ENCODE measurements at regions of chr18 and their contacts with region 1.

Region 1: GRCh38 chr18:712401-713134 is at the start of gene ENOSF1:
- DNase-seq: peak; percentile 54 to 93
- H3K4me3 ChIP-seq: peak within 1 kb of the TSS; percentile 63 to 97
- H3K27ac ChIP-seq: peak within 1 kb of the TSS; percentile 74 to 82
- H3K4me1 ChIP-seq: no peaks in the 10 kb centered on the region
- H3K27me3 ChIP-seq: no peaks in the 10 kb centered on the region
- CTCF ChIP-seq: peak; percentile 71 to 93 (median 86)
- total RNA-seq, gene ENOSF1: 178 TPM

Region 2: DNA sequence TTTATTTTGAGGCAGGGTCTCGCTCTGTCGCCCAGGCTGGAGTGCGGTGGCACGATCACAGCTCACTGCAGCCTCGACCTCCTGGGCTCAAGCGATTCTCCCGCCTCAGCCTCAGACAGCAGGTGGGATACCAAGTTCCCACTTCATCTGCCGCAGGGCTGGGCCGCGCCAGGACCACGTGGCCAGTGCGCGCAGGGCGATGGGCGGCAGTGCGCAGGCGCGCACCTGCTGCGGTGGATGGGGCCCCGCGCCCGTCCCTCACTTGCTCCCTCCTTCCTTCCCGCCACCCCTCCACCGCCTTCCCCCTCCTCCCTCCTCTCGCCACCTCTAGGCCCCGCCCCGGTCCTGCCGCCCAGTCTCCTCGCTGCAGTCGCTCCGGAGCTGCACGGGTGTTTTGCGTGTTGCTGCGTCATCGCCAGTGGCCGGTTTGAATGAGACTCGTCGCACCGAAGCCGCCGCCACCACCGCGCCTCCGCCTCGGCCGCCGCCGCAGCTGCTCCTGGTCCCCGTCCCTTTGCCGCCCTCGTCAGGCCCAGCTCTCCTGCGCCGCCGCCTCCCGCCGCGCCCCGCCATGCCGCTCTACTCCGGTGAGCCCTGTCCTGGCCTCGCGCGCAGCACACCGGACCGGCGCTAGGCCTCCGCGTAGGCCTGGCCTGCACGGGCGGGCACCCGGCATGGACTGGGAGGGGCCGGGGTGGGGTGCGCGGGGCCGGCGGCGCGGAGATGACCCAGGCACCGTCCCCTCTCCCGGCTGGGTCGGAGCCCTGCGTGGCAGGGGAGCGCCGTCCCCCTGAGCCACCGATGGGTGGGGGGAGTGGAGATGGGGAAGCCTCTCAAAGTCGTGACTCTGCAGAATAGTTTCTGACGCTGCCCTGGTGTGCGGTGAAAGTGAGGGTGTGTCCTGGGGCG is 554.2 kb before region 1 on chr18 and contains the start of gene USP14:
- intact Hi-C with region 1: loop called (anchors 5 kb)
- DNase-seq: peak; percentile 89 to 97
- H3K4me3 ChIP-seq: peak within 1 kb of the TSS; percentile 94 to 97
- H3K27ac ChIP-seq: peak within 1 kb of the TSS; percentile 79 to 87
- H3K4me1 ChIP-seq: peaks cover 5 to 11% of the 10 kb centered on the region in 2 donors
- H3K27me3 ChIP-seq: no peaks in the 10 kb centered on the region
- CTCF ChIP-seq: peak in 2 of 3 experiments; percentile 18 to 21
- total RNA-seq, gene USP14: 9.7 TPM

Region 3: DNA sequence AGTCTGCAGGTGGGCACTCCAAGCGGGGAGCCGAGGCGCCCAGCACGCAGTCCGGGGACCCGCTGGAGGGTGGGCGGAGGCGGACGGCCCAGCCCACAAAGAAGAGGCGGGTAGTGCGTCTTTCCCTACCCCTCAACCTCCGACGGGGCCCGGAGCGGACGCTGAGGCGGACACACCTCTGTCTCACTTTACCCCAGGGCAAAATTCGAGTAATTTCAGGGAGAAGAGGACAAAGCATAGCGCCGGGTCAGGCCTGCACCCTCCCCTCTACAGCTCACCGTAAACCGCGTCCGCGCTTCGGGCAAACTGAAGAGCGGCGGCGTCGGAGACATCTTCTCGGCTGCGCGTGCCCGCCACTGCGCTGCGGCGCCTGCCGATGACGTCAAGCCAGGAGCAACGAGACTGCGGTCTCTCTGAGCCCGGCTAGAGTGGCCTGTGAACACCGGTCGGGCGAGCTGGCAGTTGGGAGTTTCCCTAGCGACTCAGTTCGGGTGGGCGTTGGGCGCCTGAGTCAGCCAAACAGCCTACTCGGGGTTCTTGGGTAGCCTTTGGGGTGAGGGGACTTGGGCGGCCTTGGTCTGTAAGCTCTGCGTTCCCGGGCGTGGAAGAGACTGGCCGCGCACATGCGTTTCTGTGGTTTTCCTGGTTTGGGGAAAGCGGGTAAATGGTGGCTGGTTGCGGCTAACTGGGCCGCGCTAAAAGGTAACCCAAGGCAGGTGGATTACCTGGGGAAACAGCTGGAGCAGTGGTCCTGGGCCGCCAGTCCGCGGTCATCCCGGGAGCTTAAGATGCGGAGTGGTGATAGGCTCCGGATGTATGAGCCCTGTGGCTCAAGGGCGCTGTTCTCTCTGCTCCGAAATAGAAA is 444.6 kb before region 1 on chr18 and contains the start of gene THOC1:
- intact Hi-C with region 1: loop called (anchors 5 kb)
- DNase-seq: peak; percentile 70 to 95
- H3K4me3 ChIP-seq: peak within 1 kb of the TSS; percentile 66 to 80
- H3K27ac ChIP-seq: peak within 1 kb of the TSS; percentile 77 to 90
- H3K4me1 ChIP-seq: peaks cover 6 to 7% of the 10 kb centered on the region in 2 donors
- H3K27me3 ChIP-seq: no peaks in the 10 kb centered on the region
- CTCF ChIP-seq: no peak
- total RNA-seq, gene THOC1: 12.0 TPM

Region 4: DNA sequence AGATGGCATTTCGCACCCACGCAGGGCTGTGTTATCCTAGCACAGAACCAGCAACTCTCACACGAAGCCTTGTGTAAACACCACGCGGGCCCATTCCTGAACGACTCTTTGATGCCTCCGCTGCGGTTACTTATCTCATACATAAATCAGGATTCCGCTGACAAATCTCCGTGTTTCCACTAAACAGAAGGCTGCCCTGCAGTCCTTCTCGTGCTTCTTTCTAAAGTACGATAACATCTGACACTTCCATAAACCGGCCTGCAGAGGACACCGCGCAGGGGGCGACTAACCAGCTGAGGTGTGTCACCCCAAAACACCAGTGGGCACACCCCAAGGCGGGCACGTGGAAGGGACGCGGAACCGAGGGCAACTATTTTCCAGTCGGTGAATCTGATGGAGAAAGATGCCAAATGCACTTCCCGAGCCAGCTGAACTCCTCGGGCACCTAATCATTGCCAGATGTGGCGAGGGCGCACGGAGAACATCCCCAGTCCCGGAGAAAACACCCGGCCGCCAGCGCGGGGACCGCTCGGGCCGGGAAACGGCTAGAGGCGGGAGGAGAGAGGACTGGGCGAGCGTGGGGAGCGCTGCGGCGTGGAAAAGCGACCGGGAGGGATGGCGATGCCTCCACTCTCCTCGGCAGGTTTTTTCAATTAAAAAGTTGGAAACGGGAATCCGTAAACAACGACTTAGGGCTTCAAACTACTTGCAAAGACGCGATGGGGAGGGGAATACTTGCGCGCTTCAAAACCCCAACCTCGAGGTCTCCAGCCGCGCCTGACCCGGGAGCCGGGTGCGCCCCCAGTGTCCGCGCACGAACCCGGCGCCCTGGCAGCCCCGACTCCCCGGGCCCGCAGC is 212.8 kb before region 1 on chr18:
- intact Hi-C with region 1: no loop called
- DNase-seq: no peak
- H3K4me3 ChIP-seq: peak overlapping the region; percentile 51 to 81
- H3K27ac ChIP-seq: no peak overlapping the region
- H3K4me1 ChIP-seq: peaks cover 4 to 9% of the 10 kb centered on the region in 2 donors
- H3K27me3 ChIP-seq: no peaks in the 10 kb centered on the region
- CTCF ChIP-seq: peak in 1 of 3 experiments; percentile 18

Region 5: GRCh38 chr18:812376-813171 is 100.0 kb after region 1 on chr18:
- intact Hi-C with region 1: loop called (anchors 2 kb)
- DNase-seq: peak; percentile 60 to 92
- H3K4me3 ChIP-seq: peak overlapping the region; percentile 93 to 95
- H3K27ac ChIP-seq: peak overlapping the region; percentile 82 to 95
- H3K4me1 ChIP-seq: no peaks in the 10 kb centered on the region
- H3K27me3 ChIP-seq: no peaks in the 10 kb centered on the region
- CTCF ChIP-seq: no peak

Region 6: GRCh38 chr18:2655178-2655953 is 1942.8 kb after region 1 on chr18 and contains the start of gene SMCHD1:
- intact Hi-C with region 1: loop called (anchors 5 kb)
- DNase-seq: peak; percentile 66 to 93
- H3K4me3 ChIP-seq: peak within 1 kb of the TSS; percentile 83 to 95
- H3K27ac ChIP-seq: peak within 1 kb of the TSS; percentile 97 to 98
- H3K4me1 ChIP-seq: peaks cover 3 to 27% of the 10 kb centered on the region in 2 donors
- H3K27me3 ChIP-seq: no peaks in the 10 kb centered on the region
- CTCF ChIP-seq: no peak
- total RNA-seq, gene SMCHD1: 29.2 TPM

Measured in ascending aorta (tissue), 2 donors.